ENCODE measurements at regions of chr11 and their contacts with region 1.

Region 1: GRCh38 chr11:77820563-77821348 is at the starts of genes AAMDC and RSF1:
- DNase-seq: peak; percentile 94 to 98 (median 95)
- ATAC-seq: peak; percentile 90
- H3K4me3 ChIP-seq: peak within 1 kb of the TSS; percentile 97
- H3K27ac ChIP-seq: peak within 1 kb of the TSS; percentile 92
- H3K4me1 ChIP-seq: peaks cover 12 to 22% of the 10 kb centered on the region in 2 experiments; a peak in 4 of 5 replicates
- H3K27me3 ChIP-seq: no peaks in the 10 kb centered on the region
- CTCF ChIP-seq: peak; percentile 70 to 85 (median 73)
- EP300 ChIP-seq: peak; percentile 24; the same call in 1 of the 2 replicates
- POLR2A ChIP-seq: peak; percentile 82
- RAD21 ChIP-seq: peak; percentile 45 to 46
- polyA plus RNA-seq, gene AAMDC: 37.5 to 40.6 TPM
- polyA plus RNA-seq, gene RSF1: 9.7 to 14.4 TPM

Region 2: GRCh38 chr11:77497368-77497767 is 323.4 kb before region 1 on chr11:
- CTCF ChIA-PET with region 1: no interaction called
- POLR2A ChIA-PET with region 1: no interaction called
- in situ Hi-C with region 1: no loop called
- intact Hi-C with region 1: no loop called
- DNase-seq: no peak
- ATAC-seq: no peak
- H3K4me3 ChIP-seq: no peak overlapping the region
- H3K27ac ChIP-seq: no peak overlapping the region
- H3K4me1 ChIP-seq: no peaks in the 10 kb centered on the region
- H3K27me3 ChIP-seq: peaks cover 3 to 17% of the 10 kb centered on the region in 2 experiments; a peak in 3 of 5 replicates
- CTCF ChIP-seq: no peak
- EP300 ChIP-seq: no peak
- POLR2A ChIP-seq: no peak
- RAD21 ChIP-seq: no peak

Region 3: DNA sequence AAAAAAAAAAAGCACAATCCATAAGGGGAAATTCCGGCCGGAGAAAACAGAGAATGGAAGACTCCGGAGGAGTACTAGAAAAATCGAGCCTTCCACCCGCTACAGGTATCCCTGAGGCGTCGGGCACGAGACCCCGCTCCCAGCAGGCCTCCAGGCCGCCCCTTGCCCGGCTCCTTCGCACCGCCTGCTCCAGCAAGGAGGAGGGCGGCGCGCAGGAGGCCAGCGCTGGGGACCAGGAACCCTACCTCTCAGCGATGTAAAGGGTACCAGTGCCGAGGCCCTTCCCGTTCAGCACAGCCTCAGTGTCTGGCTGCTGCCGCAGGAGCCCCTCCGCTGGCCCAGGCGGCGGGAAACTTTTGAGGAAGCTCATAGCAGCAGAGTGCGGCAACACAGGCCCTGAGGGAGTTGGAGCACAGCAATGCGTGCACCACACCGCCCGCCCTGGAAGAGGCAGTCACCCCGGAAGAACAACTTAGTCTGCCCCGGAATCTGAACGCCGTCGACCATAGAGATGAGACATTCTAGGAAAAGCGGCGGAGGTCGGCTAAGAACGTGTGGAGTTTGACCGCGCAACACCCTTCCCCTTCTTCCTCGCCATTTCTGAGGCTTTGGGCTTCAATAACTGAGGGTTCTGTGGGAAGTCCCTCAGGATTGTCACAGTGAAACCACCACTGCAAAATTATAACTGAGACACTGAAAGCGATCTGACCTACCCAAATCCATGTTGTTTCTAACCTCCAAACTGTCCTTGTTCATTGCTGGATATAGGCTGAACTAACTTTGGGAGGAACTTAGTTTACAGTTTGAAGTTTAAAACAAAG is 183.2 kb before region 1 on chr11 and contains the start of gene CLNS1A:
- CTCF ChIA-PET with region 1: no interaction called
- POLR2A ChIA-PET with region 1: no interaction called
- in situ Hi-C with region 1: no loop called
- intact Hi-C with region 1: loop called (anchors 2 kb)
- DNase-seq: peak; percentile 72 to 96 (median 78)
- ATAC-seq: peak; percentile 96
- H3K4me3 ChIP-seq: peak within 1 kb of the TSS; percentile 87
- H3K27ac ChIP-seq: peak within 1 kb of the TSS; percentile 99
- H3K4me1 ChIP-seq: peaks cover 15 to 17% of the 10 kb centered on the region in 2 experiments
- H3K27me3 ChIP-seq: no peaks in the 10 kb centered on the region
- CTCF ChIP-seq: no peak
- EP300 ChIP-seq: peak; percentile 70; the same call in 1 of the 2 replicates
- POLR2A ChIP-seq: peak; percentile 97
- RAD21 ChIP-seq: no peak
- polyA plus RNA-seq, gene CLNS1A: 146 to 164 TPM

Region 4: DNA sequence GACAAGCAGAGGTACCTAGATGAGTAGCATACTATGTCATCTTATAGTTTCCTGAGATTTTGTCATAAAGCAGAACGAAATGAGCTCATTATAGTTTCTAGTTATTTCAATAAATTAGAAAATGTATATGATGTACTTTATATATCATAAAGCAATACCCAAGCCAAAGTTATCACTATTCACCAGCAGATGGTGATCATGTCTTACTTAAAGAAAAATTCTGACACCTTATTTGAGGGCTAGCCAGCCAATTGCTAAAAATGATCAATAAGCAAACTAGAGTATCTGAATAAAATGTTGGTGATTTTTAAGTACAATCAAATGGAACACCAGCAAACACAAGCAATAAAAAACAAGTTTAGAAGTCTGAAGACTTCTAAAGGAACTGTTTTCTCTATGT is 44.3 kb before region 1 on chr11:
- CTCF ChIA-PET with region 1: no interaction called
- POLR2A ChIA-PET with region 1: no interaction called
- in situ Hi-C with region 1: no loop called
- intact Hi-C with region 1: loop called (anchors 2 kb)
- DNase-seq: peak in 2 of 4 experiments; percentile 21 to 27
- ATAC-seq: peak; percentile 56; the same call in 2 of the 3 replicates
- H3K4me3 ChIP-seq: no peak overlapping the region
- H3K27ac ChIP-seq: no peak overlapping the region
- H3K4me1 ChIP-seq: peaks cover 0 to 3% of the 10 kb centered on the region in 2 experiments; a peak in 1 of 5 replicates
- H3K27me3 ChIP-seq: no peaks in the 10 kb centered on the region
- CTCF ChIP-seq: peak in 2 of 3 experiments; percentile 27 to 50; a peak in 3 of 6 replicates
- EP300 ChIP-seq: no peak
- POLR2A ChIP-seq: no peak
- RAD21 ChIP-seq: peak; percentile 24 to 62

Region 5: GRCh38 chr11:77994412-77995362 is 173.9 kb after region 1 on chr11 and contains the start of gene INTS4:
- CTCF ChIA-PET with region 1: no interaction called
- POLR2A ChIA-PET with region 1: interaction called, 5 read pairs
- in situ Hi-C with region 1: no loop called
- intact Hi-C with region 1: loop called (anchors 1 kb)
- DNase-seq: peak; percentile 94 to 100 (median 96)
- ATAC-seq: peak; percentile 99
- H3K4me3 ChIP-seq: peak within 1 kb of the TSS; percentile 54
- H3K27ac ChIP-seq: peak within 1 kb of the TSS; percentile 87
- H3K4me1 ChIP-seq: peaks cover 4 to 6% of the 10 kb centered on the region in 2 experiments; a peak in 3 of 5 replicates
- H3K27me3 ChIP-seq: no peaks in the 10 kb centered on the region
- CTCF ChIP-seq: peak in 1 of 3 experiments; percentile 13; a peak in 1 of 6 replicates
- EP300 ChIP-seq: peak; percentile 51; the same call in 1 of the 2 replicates
- POLR2A ChIP-seq: peak; percentile 80
- RAD21 ChIP-seq: no peak
- polyA plus RNA-seq, gene INTS4: 31.1 to 44.5 TPM